Dendritic cell treated with granulocyte-macrophage colony-stimulating factor and Interleukin-4, amounts not matched to agents 40 ng/mL and 50 ng/mL, for 4 days (primary cell): ENCODE measurements at regions of chr20 and their contacts with region 1.

Region 1: DNA sequence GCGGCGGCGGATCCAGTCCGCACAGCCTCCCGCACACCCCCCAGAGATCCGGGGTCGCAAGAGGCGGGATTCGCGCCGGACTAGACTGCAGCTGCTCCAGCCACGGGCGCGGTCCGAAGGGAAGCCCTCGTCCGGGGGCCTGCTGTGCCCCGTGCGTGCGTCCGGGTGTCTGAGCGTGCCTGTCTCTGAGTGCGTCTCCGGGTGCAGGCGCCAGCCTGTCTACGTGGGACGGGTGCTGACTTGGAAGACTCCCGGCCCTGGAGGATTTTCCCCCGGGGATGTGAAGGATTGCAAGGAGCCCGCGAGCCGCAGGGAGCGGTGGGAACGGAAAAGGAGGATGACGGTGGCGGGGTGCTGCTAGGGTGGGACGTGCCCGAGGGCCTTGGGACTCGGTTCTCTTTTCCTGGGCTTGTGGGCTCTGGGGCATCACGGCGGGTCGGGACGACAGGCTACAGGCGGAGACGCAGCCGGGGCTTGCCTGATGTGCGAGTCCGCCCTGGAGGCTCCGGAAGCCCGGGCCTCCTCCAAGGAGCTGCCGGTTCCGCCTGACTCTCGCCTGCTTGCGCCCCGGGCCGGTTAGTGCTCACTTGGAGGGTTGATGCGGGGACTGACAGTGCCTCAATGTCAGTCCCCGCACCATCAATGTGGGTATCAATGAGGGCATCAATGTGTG is 5.7 kb downstream of the MAFB start:
- H3K4me3 Mint-ChIP-seq: peak overlapping the region; percentile 100
- H3K27ac Mint-ChIP-seq: peak overlapping the region; percentile 97
- H3K4me1 Mint-ChIP-seq: peaks cover 59% of the 10 kb centered on the region
- H3K27me3 Mint-ChIP-seq: peaks cover 20% of the 10 kb centered on the region

Region 2: GRCh38 chr20:40331807-40332560 is 351.4 kb before region 1 on chr20:
- intact Hi-C with region 1: no loop called
- H3K4me3 Mint-ChIP-seq: no peak overlapping the region
- H3K27ac Mint-ChIP-seq: peak overlapping the region; percentile 55
- H3K4me1 Mint-ChIP-seq: peaks cover 67% of the 10 kb centered on the region
- H3K27me3 Mint-ChIP-seq: peaks cover 8% of the 10 kb centered on the region

Region 3: GRCh38 chr20:40506567-40506966 is 176.8 kb before region 1 on chr20:
- intact Hi-C with region 1: loop called (anchors 5 kb)
- H3K4me3 Mint-ChIP-seq: no peak overlapping the region
- H3K27ac Mint-ChIP-seq: peak overlapping the region; percentile 77
- H3K4me1 Mint-ChIP-seq: peaks cover 83% of the 10 kb centered on the region
- H3K27me3 Mint-ChIP-seq: no peaks in the 10 kb centered on the region

Region 4: GRCh38 chr20:40563296-40563944 is 119.9 kb before region 1 on chr20:
- intact Hi-C with region 1: loop called (anchors 2 kb)
- H3K4me3 Mint-ChIP-seq: no peak overlapping the region
- H3K27ac Mint-ChIP-seq: peak overlapping the region; percentile 2
- H3K4me1 Mint-ChIP-seq: peaks cover 42% of the 10 kb centered on the region
- H3K27me3 Mint-ChIP-seq: peaks cover 3% of the 10 kb centered on the region